Lower leg skin (tissue), 4 donors: ENCODE measurements at regions of chr5 and their contacts with region 1.

Region 1: GRCh38 chr5:65925601-65926275 is 637 bp upstream of the ERBIN start:
- DNase-seq: peak; percentile 66 to 95
- H3K4me3 ChIP-seq: peak overlapping the region; percentile 87
- CTCF ChIP-seq: no peak
- POLR2A ChIP-seq: peak in 1 of 2 donors; percentile 63

Region 2: DNA sequence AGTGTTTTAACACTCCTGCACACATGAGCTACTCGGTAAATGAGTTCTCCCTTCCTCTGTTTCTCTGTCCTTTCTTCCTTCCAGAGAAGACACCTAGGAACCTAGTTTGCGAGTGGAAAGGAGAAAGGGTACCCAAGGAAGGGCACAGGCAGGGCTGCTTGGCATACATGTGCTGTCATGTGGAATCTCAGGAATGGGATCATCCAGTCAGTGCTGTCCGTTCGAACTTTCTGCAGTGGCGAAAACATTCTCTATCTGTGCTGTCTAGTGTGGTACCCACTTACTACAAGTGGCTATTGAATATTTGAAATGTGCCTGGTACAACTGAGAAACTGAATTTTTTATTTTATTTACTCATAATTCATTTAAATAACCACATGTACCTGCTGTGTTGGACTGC is 175.8 kb before region 1 on chr5:
- intact Hi-C with region 1: no loop called
- DNase-seq: no peak
- H3K4me3 ChIP-seq: no peak overlapping the region
- CTCF ChIP-seq: no peak
- POLR2A ChIP-seq: no peak

Region 3: DNA sequence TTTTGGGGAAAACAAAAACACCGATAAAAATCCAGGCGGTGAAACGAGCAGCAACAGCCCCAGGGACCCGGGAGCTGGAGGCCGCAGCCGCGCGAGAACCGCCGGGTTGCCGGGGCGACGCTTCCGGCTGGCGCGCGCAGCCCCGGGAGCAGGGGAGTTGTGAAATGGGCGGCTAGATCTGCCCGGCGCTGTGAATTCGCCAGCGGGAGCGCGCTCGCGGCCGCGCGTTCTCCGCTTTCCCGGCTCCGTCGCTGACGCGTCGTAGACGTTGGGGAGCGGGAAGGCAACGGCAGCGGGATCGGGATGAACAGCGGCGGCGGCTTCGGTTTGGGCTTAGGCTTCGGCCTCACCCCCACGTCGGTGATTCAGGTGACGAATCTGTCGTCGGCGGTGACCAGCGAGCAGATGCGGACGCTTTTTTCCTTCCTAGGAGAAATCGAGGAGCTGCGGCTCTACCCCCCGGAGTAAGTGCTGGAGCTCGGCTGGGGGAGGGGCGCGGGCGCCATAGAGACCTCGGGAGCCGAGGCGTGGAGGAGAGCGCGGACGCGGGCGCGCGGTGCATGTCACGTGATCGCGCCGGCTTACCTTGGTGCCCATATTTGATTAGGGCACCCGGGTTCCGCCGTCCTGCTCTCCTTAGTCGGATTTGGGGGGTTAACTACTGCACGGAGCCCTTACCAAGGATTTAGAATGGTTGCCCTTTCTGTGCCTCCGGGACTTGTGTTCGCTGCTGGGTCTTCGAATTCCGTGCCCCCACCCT is 218.5 kb after region 1 on chr5 and contains the start of gene SREK1:
- intact Hi-C with region 1: loop called (anchors 5 kb)
- DNase-seq: peak; percentile 92 to 99
- H3K4me3 ChIP-seq: peak within 1 kb of the TSS; percentile 53
- CTCF ChIP-seq: no peak
- POLR2A ChIP-seq: peak in 1 of 2 donors; percentile 21
- total RNA-seq, gene SREK1: 33.2 to 86.4 (median 52.7) TPM